Cardiac septum (tissue), 1 donor: ENCODE measurements at regions of chr1 and their contacts with region 1.

Region 1: DNA sequence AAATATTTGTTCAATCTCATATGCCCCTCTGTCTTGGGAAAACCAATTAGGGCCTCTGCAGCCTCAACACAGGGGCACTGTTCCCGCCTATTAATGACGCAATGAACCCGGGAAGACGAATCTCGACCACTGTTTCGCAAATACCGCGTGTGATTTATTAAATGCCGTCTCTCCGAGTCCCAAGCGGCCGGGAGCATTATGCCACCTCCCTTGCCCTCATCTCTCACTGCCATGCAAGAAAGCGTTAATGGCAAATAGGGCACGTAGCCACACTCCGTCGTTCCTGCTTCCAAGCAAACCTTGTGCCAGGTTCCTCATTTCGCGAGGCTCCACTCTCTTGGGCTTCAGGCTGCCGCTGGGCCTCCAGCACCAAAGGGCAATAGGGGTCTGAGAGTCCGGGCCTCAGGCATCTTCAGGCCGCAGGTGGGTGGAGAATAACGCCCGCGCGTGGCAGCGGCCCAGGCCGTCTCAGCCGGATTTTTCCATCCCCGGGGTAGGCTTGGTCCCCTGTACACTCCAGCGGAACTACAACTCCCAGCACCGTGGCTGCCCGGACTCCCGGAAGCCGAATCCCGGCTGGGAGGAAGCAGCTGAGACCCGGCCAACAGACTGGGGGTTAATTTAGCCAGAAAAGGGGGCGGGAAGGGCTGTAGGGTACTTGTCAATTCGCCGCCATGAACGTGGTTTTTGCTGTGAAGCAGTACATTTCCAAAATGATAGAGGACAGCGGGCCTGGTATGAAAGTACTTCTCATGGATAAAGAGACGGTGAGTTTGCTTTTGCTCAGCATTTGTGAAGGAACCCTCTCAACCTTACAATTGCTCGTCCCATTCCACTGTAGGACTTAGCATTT is at the start of gene VPS45:
- DNase-seq: peak; percentile 96
- total RNA-seq, gene VPS45: 71.6 TPM

Region 2: GRCh38 chr1:150053926-150054325 is 13.5 kb before region 1 on chr1:
- intact Hi-C with region 1: no loop called
- DNase-seq: no peak

Region 3: GRCh38 chr1:150162862-150163706 is 95.7 kb after region 1 on chr1:
- intact Hi-C with region 1: loop called (anchors 1 kb)
- DNase-seq: peak; percentile 90